Activated T-helper 1 cell treated with anti-CD3 and anti-CD28 coated beads, Interleukin-12 subunit alpha, Interleukin-12 subunit beta, Interleukin-2, Interleukin-4 antibody, amounts not matched to agents 30 ng/mL and 10 ng/mL and 1 ng/mL, durations not matched to agents 14 hours and 24 hours and 36 hours (primary cell): ENCODE measurements at regions of chr5 and their contacts with region 1.

Region 1: DNA sequence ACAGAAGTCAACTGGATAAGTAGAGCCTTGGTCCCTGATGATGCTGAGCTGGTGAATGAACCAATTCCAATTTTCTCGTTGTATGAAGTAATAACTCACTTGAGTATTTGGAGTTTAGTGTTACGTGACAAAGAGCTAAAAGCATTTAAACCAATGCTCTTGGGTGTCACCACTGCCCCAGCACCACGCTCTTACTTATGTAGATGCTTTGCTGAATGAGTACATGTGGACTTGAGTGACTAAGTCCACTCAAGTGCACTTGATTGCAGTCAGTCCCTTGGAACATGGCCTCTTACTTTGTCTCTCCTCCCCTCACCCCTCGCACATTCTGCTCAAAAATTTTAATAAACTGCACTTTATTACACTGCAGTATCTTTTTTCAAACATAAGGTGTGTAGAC is 184.0 kb downstream of the MAN2A1 start:
- DNase-seq: no peak
- H3K4me3 Mint-ChIP-seq: no peak overlapping the region
- H3K27ac Mint-ChIP-seq: no peak overlapping the region
- H3K4me1 Mint-ChIP-seq: peaks cover 44% of the 10 kb centered on the region
- H3K27me3 Mint-ChIP-seq: peaks cover 2% of the 10 kb centered on the region

Region 2: DNA sequence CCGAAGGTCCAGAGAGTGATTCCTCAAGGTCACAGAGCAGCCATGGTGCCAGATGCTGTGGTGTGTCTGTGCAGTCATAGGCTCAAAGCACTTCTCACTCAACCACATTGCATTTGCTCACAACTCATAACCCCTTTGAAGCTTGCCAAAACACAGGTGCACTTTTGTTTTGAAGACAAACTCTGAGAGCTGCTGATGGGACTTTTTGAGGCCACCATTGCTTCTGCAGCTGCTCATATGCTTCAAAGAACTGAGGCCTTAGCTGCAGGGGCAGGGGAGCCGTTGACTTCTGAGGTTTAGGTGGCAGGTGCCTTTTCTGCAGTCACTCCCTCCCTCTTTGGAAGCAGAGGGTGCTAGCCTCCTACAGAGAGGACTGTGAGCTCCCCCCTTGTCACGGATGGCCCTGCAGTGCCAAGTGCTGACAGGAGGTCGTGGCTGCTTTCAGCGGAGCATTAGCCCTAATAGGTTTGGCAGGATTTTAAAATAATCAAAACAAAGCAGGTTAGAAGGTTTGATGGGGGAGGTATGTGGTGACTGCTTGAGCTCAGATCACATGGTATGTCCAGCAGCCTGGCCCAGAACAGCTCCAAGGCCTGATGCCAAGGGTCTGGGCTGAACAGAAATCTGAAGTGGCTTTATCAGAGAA is 48.2 kb after region 1 on chr5:
- intact Hi-C with region 1: loop called (anchors 5 kb)
- DNase-seq: peak; percentile 61
- H3K4me3 Mint-ChIP-seq: peak overlapping the region; percentile 74
- H3K27ac Mint-ChIP-seq: peak overlapping the region; percentile 95
- H3K4me1 Mint-ChIP-seq: peaks cover 39% of the 10 kb centered on the region
- H3K27me3 Mint-ChIP-seq: no peaks in the 10 kb centered on the region

Region 3: GRCh38 chr5:110321117-110321516 is 447.4 kb after region 1 on chr5:
- intact Hi-C with region 1: no loop called
- DNase-seq: no peak
- H3K4me3 Mint-ChIP-seq: no peak overlapping the region
- H3K27ac Mint-ChIP-seq: no peak overlapping the region
- H3K4me1 Mint-ChIP-seq: peaks cover 4% of the 10 kb centered on the region
- H3K27me3 Mint-ChIP-seq: no peaks in the 10 kb centered on the region

Region 4: DNA sequence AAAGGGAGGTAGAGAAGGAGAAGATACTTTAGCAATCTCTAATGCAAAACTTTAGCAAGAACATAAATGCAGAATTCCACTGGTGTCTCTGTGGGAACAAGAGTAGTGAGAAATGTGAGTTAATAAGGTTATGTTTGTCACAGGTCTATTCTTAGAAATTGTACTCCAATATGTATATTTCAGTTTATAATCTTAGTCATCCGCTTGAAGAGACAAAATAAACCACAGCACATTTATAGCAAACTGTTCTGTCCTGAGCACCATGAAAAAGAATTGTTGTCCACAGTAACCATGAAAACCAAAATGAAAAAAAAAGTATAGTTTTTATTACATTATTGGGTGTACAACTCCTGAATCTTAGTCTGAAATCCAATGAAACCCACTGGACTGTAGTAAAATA is 1104.2 kb after region 1 on chr5:
- intact Hi-C with region 1: no loop called
- DNase-seq: no peak
- H3K4me3 Mint-ChIP-seq: no peak overlapping the region
- H3K27ac Mint-ChIP-seq: no peak overlapping the region
- H3K4me1 Mint-ChIP-seq: no peaks in the 10 kb centered on the region
- H3K27me3 Mint-ChIP-seq: no peaks in the 10 kb centered on the region